IMR-90 (cell line): ENCODE measurements at regions of chr9 and their contacts with region 1.

Region 1: DNA sequence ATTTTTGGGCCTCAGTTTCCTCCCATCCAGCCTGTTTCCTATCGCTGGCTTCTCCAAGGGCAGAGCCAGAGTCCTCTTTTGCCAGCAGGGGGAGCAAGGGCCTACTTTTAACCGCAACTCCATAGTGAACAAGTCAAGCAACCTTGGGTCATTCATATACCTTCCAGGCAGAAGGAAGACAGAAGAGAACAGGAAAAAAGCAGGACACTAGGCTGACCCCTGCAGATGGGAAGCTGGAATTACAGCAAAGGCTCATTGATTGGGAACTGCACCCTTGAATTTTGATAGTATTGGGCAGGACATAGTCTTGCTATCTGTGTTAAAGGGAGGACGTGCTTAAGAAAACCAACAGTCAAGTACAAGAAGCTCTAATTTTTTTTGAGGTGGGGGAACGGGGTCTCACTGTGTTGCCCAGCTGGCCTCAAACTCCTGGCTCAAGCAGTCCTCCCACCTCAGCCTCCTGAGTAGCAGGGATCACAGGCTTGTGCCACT is 30.1 kb downstream of the QRFP start:
- DNase-seq: peak; percentile 89
- ATAC-seq: peak; percentile 82
- H3K4me3 ChIP-seq: no peak overlapping the region
- H3K27ac ChIP-seq: no peak overlapping the region
- H3K4me1 ChIP-seq: peaks cover 8% of the 10 kb centered on the region
- H3K27me3 ChIP-seq: no peaks in the 10 kb centered on the region
- CTCF ChIP-seq: peak; percentile 88
- POLR2A ChIP-seq: no peak
- RAD21 ChIP-seq: peak; percentile 74

Region 2: GRCh38 chr9:130701056-130702022 is 165.2 kb before region 1 on chr9:
- CTCF ChIA-PET with region 1: interaction called, 12 read pairs
- POLR2A ChIA-PET with region 1: no interaction called
- dilution Hi-C with region 1: no loop called
- in situ Hi-C with region 1: loop called (anchors 5 kb)
- intact Hi-C with region 1: no loop called
- DNase-seq: peak; percentile 88
- ATAC-seq: peak; percentile 94
- H3K4me3 ChIP-seq: no peak overlapping the region
- H3K27ac ChIP-seq: no peak overlapping the region; the same call in 1 of the 2 replicates
- H3K4me1 ChIP-seq: peaks cover 17% of the 10 kb centered on the region
- H3K27me3 ChIP-seq: no peaks in the 10 kb centered on the region
- CTCF ChIP-seq: peak; percentile 96
- POLR2A ChIP-seq: no peak
- RAD21 ChIP-seq: peak; percentile 90

Region 3: GRCh38 chr9:130756037-130756436 is 110.5 kb before region 1 on chr9:
- CTCF ChIA-PET with region 1: interaction called, 11 read pairs
- POLR2A ChIA-PET with region 1: no interaction called
- dilution Hi-C with region 1: no loop called
- in situ Hi-C with region 1: no loop called
- intact Hi-C with region 1: no loop called
- DNase-seq: no peak
- ATAC-seq: no peak
- H3K4me3 ChIP-seq: no peak overlapping the region
- H3K27ac ChIP-seq: no peak overlapping the region
- H3K4me1 ChIP-seq: peaks cover 8% of the 10 kb centered on the region; the same call in 1 of the 2 replicates
- H3K27me3 ChIP-seq: no peaks in the 10 kb centered on the region
- CTCF ChIP-seq: no peak
- POLR2A ChIP-seq: no peak
- RAD21 ChIP-seq: no peak

Region 4: GRCh38 chr9:130940693-130941576 is 74.4 kb after region 1 on chr9:
- CTCF ChIA-PET with region 1: interaction called, 4 read pairs
- POLR2A ChIA-PET with region 1: no interaction called
- dilution Hi-C with region 1: no loop called
- in situ Hi-C with region 1: no loop called
- intact Hi-C with region 1: loop called (anchors 2 kb)
- DNase-seq: peak; percentile 15
- ATAC-seq: no peak
- H3K4me3 ChIP-seq: no peak overlapping the region
- H3K27ac ChIP-seq: no peak overlapping the region
- H3K4me1 ChIP-seq: peaks cover 15% of the 10 kb centered on the region
- H3K27me3 ChIP-seq: peaks cover 45% of the 10 kb centered on the region
- CTCF ChIP-seq: peak; percentile 72
- POLR2A ChIP-seq: no peak
- RAD21 ChIP-seq: peak; percentile 74

Region 5: DNA sequence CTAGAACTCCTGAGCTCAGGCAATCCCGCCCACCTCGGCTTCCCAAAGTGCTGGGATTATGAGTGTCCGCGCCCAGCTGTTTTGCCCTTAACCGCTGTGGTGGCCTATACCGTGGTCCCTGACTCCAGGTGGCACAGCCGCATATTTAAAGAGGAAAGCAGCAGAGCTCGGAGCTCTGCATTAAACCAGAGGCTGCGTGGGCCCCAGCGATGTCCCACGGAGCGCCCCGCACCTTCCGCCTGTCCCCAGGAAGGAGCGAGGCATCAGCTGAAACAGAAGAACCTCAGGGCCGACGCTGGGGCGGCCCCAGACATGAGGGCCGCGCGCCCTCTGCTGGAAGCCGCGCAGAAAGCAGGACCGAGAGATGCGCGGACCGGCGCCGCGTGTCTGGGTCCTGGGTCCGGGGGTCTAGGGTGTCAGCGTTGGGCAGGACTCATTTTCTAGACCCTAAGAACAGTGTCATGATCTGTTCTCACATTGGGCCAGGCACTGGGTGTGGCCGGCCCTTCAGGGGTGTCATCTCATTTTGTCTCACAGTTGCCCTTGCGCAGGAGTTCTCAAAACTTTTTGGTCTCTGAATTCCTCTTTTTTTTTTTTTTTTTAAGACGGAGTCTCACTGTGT is 180.2 kb after region 1 on chr9:
- CTCF ChIA-PET with region 1: interaction called, 9 read pairs
- POLR2A ChIA-PET with region 1: no interaction called
- dilution Hi-C with region 1: no loop called
- in situ Hi-C with region 1: no loop called
- intact Hi-C with region 1: loop called (anchors 1 kb)
- DNase-seq: peak; percentile 49
- ATAC-seq: peak; percentile 98
- H3K4me3 ChIP-seq: no peak overlapping the region
- H3K27ac ChIP-seq: no peak overlapping the region
- H3K4me1 ChIP-seq: no peaks in the 10 kb centered on the region; the same call in 1 of the 2 replicates
- H3K27me3 ChIP-seq: peaks cover 17% of the 10 kb centered on the region
- CTCF ChIP-seq: peak; percentile 88
- POLR2A ChIP-seq: no peak
- RAD21 ChIP-seq: peak; percentile 89